Left ventricle myocardium superior (tissue), 1 donor: ENCODE measurements at regions of chr13 and their contacts with region 1.

Region 1: DNA sequence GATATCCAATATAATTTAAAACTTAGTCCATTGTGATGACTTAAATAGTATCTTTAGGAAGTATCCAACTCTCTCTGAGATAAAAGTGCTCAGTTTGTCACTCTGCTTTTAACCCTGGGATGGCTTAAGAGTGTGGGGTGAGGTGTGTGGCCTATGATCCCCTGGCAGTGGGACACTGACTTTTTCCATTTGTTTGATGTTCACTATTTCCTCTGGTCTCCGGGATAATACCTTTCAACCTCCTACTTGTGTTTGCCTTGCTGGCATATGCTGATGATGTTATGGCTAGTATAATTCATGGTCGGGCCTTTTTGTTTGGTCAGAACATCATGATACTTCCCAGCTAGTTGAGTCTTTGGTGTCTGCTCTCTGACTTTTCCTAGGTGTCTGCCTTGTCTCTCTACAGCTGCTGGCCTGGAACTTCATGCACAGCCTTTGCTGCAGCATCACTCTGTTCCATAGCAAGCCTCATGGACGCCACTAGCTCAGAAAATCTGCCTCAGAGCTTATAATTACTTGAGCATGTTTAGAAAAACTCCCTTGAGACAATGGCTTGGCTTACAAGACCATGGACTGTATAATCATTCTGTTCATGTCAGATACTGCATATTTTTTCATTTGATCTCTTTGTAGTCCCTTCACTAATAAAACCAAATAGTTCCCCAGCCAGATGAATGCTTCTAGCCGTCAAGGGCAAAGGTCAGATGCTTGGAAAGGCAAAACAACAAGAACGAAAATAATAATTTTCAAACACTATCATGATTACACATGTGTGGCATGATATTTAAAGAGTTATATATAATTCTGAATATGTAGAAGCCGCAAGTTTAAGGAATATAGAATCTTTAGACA is 75.2 kb downstream of the WDFY2 start:
- DNase-seq: no peak
- ATAC-seq: peak; percentile 78

Region 2: GRCh38 chr13:51704399-51705313 is 45.2 kb after region 1 on chr13:
- intact Hi-C with region 1: loop called (anchors 10 kb)
- DNase-seq: no peak
- ATAC-seq: no peak

Region 3: DNA sequence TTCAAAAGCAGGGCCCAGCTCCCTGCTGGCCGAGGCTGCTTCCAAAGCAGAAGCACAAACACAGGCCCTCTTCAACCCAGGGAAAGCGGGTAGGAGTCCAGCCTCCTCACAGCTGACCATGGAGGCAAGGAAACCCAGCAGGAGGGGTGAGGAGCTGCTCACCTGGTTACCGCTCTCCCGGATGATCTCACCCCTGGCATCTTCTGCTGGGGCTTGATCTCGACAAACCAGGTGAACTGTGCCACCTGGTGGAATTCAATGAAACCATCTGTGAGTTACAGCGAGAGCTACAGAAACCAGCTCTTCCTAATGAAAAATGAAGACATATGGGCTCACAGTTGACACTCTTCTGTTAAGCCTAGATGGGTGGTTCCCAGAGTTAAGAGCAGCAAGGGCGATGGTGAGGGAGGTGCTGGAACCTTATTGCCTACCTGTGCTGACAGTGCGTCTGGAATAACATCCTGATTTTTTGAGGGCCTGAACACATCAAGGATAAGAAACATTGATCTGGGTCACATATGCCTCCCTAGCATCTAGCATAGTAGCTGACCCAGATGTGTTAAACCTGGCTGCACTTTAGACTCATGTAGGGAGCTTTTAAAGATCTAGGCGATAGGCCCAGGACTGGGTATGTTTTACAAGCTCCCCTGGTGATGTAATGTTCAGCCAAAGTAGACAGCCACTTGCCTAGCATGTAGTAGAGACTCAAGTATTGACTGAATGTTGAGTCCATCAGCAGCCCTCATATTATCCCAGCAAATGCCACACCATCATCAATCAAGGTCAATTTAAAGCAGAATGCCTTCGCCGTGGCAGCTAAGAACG is 138.4 kb after region 1 on chr13:
- intact Hi-C with region 1: no loop called
- DNase-seq: no peak
- ATAC-seq: no peak